PC-9 (cell line): ENCODE measurements at regions of chr12 and their contacts with region 1.

Region 1: DNA sequence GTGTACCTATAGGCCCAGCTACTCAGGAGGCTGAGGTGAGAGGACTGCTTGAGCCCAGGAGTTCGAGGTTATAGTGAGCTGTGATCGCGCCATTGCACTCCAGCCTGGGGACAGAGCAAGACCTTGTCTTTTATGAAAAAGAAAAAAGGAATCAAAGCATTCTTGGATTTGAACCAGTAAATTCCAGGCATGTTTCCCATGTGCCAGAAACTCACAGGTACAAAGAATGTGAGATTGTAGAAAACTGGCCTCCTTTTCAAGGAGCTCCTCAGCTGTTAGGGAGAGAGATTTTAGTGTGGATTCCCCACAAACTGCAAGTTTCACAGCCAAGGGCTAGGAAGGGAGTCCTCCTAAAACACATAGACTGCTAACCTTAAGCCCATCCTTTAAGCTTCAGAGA is 95.0 kb downstream of the FOXN4 start:
- DNase-seq: no peak
- H3K4me3 ChIP-seq: no peak overlapping the region
- H3K27ac ChIP-seq: no peak overlapping the region
- H3K4me1 ChIP-seq: no peaks in the 10 kb centered on the region
- H3K27me3 ChIP-seq: no peaks in the 10 kb centered on the region
- CTCF ChIP-seq: no peak

Region 2: GRCh38 chr12:108907476-108908351 is 306.4 kb before region 1 on chr12:
- CTCF ChIA-PET with region 1: no interaction called
- POLR2A ChIA-PET with region 1: interaction called, 12 read pairs
- intact Hi-C with region 1: no loop called
- DNase-seq: peak; percentile 61 to 79
- H3K4me3 ChIP-seq: no peak overlapping the region
- H3K27ac ChIP-seq: no peak overlapping the region
- H3K4me1 ChIP-seq: peaks cover 27% of the 10 kb centered on the region
- H3K27me3 ChIP-seq: no peaks in the 10 kb centered on the region
- CTCF ChIP-seq: no peak

Region 3: DNA sequence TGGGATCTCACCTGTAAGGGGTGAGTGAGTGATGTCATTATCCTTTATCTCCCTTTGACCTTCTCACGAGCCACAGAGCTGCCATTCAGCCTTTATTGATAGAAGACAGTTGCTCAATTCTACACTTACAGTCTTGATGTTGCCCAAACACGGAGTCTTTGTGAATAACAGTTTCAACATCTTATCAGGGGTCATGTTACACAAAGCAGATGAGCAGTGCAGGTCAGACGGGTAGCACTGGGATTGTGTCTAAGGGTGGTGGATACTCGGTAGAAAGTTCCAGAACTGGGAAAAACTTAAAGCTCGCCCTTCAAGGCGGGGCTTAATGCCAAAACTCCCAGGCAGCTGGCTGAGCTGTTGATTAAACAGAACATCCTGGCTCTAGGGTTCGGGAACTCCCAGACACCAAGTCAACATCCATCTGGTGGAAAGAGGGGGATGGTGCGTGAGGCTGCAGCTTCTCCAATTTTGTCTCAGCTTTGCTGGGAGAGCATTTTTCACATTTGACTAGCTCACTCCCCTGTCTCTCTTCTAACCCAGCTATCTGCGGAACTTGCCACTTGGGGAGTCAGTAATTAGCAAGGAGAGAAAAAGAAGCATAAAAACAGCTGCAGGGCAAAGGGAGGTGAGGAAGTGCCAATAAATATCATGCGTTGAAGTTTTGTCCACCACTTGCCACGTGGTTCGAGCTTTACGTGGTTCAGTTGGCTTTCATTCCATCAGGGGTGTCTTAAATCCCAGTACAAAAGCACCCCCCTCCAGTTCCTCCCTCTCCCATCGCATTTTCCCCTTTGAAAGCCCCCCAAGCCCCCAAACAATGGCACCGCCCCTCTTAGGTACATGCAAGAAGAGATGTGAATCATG is 64.0 kb after region 1 on chr12:
- CTCF ChIA-PET with region 1: no interaction called
- POLR2A ChIA-PET with region 1: no interaction called
- intact Hi-C with region 1: no loop called
- DNase-seq: peak in 1 of 2 experiments; percentile 66
- H3K4me3 ChIP-seq: no peak overlapping the region
- H3K27ac ChIP-seq: no peak overlapping the region
- H3K4me1 ChIP-seq: no peaks in the 10 kb centered on the region
- H3K27me3 ChIP-seq: peaks cover 27% of the 10 kb centered on the region; the same call in 1 of the 2 replicates
- CTCF ChIP-seq: no peak